Activated CD8-positive, alpha-beta T cell treated with anti-CD3 and anti-CD28 coated beads for 36 hours (primary cell): ENCODE measurements at regions of chr6 and their contacts with region 1.

Region 1: DNA sequence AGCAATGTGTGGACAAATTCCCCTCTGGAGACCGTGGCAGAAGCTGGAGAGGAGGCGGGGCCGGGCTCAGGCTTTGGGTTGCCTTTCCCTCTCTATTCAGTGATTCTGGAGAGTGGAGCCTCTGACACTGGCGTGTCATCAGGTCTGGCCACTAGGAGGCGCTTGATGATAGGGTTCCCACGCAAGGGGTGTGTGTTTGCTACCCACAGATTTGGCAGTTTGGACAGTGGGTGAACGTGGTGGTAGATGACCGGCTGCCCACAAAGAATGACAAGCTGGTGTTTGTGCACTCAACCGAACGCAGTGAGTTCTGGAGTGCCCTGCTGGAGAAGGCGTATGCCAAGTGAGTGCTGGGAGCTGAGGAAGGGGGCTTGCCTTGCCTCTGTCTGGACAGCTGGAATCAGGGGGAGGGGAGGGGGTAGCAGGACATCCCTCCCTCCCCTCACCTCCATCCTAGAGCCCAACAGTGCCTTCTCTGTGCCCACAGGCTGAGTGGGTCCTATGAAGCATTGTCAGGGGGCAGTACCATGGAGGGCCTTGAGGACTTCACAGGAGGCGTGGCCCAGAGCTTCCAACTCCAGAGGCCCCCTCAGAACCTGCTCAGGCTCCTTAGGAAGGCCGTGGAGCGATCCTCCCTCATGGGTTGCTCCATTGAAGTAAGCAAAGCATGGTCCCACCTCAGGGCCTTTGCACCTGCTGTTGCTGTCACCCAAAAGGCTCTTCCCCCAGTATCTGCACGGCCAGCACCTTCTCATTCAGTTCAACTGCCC is 14.3 kb downstream of the CAPN11 start:
- DNase-seq: peak; percentile 90
- ATAC-seq: peak; percentile 65
- H3K4me3 Mint-ChIP-seq: no peak overlapping the region
- H3K27ac Mint-ChIP-seq: peak overlapping the region; percentile 81
- H3K4me1 Mint-ChIP-seq: peaks cover 27% of the 10 kb centered on the region
- H3K27me3 Mint-ChIP-seq: no peaks in the 10 kb centered on the region
- CTCF ChIP-seq: peak; percentile 89

Region 2: GRCh38 chr6:44151348-44152108 is 21.4 kb before region 1 on chr6:
- CTCF ChIA-PET with region 1: interaction called, 10 read pairs
- POLR2A ChIA-PET with region 1: no interaction called
- intact Hi-C with region 1: no loop called
- DNase-seq: peak; percentile 86
- ATAC-seq: peak; percentile 96
- H3K4me3 Mint-ChIP-seq: no peak overlapping the region
- H3K27ac Mint-ChIP-seq: no peak overlapping the region
- H3K4me1 Mint-ChIP-seq: peaks cover 5% of the 10 kb centered on the region
- H3K27me3 Mint-ChIP-seq: no peaks in the 10 kb centered on the region
- CTCF ChIP-seq: peak; percentile 99

Region 3: GRCh38 chr6:44192428-44193041 is 19.6 kb after region 1 on chr6:
- CTCF ChIA-PET with region 1: interaction called, 26 read pairs
- POLR2A ChIA-PET with region 1: interaction called, 4 read pairs
- intact Hi-C with region 1: no loop called
- DNase-seq: no peak
- ATAC-seq: no peak
- H3K4me3 Mint-ChIP-seq: no peak overlapping the region
- H3K27ac Mint-ChIP-seq: no peak overlapping the region
- H3K4me1 Mint-ChIP-seq: peaks cover 4% of the 10 kb centered on the region
- H3K27me3 Mint-ChIP-seq: no peaks in the 10 kb centered on the region
- CTCF ChIP-seq: no peak

Region 4: GRCh38 chr6:44237813-44238433 is 65.0 kb after region 1 on chr6:
- CTCF ChIA-PET with region 1: interaction called, 24 read pairs
- POLR2A ChIA-PET with region 1: interaction called, 5 read pairs
- intact Hi-C with region 1: loop called (anchors 5 kb)
- DNase-seq: peak; percentile 80
- ATAC-seq: peak; percentile 88
- H3K4me3 Mint-ChIP-seq: peak overlapping the region; percentile 76
- H3K27ac Mint-ChIP-seq: peak overlapping the region; percentile 93
- H3K4me1 Mint-ChIP-seq: peaks cover 21% of the 10 kb centered on the region
- H3K27me3 Mint-ChIP-seq: no peaks in the 10 kb centered on the region
- CTCF ChIP-seq: peak; percentile 96

Region 5: GRCh38 chr6:44257025-44257752 is 84.3 kb after region 1 on chr6 and contains the start of gene SLC35B2:
- CTCF ChIA-PET with region 1: interaction called, 12 read pairs
- POLR2A ChIA-PET with region 1: interaction called, 14 read pairs
- intact Hi-C with region 1: no loop called
- DNase-seq: peak; percentile 72
- ATAC-seq: peak; percentile 68
- H3K4me3 Mint-ChIP-seq: peak within 1 kb of the TSS; percentile 85
- H3K27ac Mint-ChIP-seq: peak within 1 kb of the TSS; percentile 85
- H3K4me1 Mint-ChIP-seq: peaks cover 66% of the 10 kb centered on the region
- H3K27me3 Mint-ChIP-seq: no peaks in the 10 kb centered on the region
- CTCF ChIP-seq: peak; percentile 77
- total RNA-seq, gene SLC35B2: 15.4 to 16.7 TPM

Region 6: GRCh38 chr6:44312901-44313788 is 140.2 kb after region 1 on chr6 and contains the start of gene AARS2:
- CTCF ChIA-PET with region 1: interaction called, 10 read pairs
- POLR2A ChIA-PET with region 1: no interaction called
- intact Hi-C with region 1: no loop called
- DNase-seq: peak; percentile 95
- ATAC-seq: peak; percentile 97
- H3K4me3 Mint-ChIP-seq: peak within 1 kb of the TSS; percentile 90
- H3K27ac Mint-ChIP-seq: peak within 1 kb of the TSS; percentile 83
- H3K4me1 Mint-ChIP-seq: peaks cover 16% of the 10 kb centered on the region
- H3K27me3 Mint-ChIP-seq: no peaks in the 10 kb centered on the region
- CTCF ChIP-seq: peak; percentile 91
- total RNA-seq, gene AARS2: 16.2 to 16.3 TPM

Region 7: DNA sequence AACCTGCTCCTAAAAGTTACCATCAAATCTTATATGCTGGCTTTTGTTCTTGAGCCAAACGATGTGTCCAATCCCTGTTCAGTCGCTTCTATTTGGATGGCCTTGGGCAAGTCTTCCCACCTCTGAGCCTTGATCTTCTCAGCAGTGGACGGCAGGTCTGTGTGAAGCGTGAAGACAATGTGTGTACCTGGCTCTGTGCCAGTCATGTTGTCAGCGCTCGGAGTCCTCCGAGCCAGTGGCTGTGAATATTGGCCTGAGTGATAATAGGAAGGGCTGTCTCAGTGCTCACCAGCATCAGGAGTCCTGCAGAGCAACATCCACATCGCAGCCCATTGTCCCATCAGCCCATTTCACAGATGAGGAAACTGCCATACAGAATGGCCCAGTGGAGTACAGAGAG is 433.6 kb after region 1 on chr6:
- CTCF ChIA-PET with region 1: no interaction called
- POLR2A ChIA-PET with region 1: no interaction called
- intact Hi-C with region 1: no loop called
- DNase-seq: no peak
- ATAC-seq: no peak
- H3K4me3 Mint-ChIP-seq: no peak overlapping the region
- H3K27ac Mint-ChIP-seq: no peak overlapping the region
- H3K4me1 Mint-ChIP-seq: no peaks in the 10 kb centered on the region
- H3K27me3 Mint-ChIP-seq: no peaks in the 10 kb centered on the region
- CTCF ChIP-seq: no peak